AG04450 (cell line): ENCODE measurements at regions of chr1 and their contacts with region 1.

Region 1: GRCh38 chr1:241611063-241611462 is 29.1 kb downstream of the CHML start:
- DNase-seq: no peak
- H3K4me3 ChIP-seq: no peak overlapping the region
- H3K27ac ChIP-seq: no peak overlapping the region
- H3K27me3 ChIP-seq: no peaks in the 10 kb centered on the region
- CTCF ChIP-seq: peak; percentile 60

Region 2: GRCh38 chr1:241440904-241441303 is 170.2 kb before region 1 on chr1:
- CTCF ChIA-PET with region 1: no interaction called
- POLR2A ChIA-PET with region 1: no interaction called
- DNase-seq: no peak
- H3K4me3 ChIP-seq: no peak overlapping the region
- H3K27ac ChIP-seq: no peak overlapping the region
- H3K27me3 ChIP-seq: no peaks in the 10 kb centered on the region
- CTCF ChIP-seq: no peak

Region 3: DNA sequence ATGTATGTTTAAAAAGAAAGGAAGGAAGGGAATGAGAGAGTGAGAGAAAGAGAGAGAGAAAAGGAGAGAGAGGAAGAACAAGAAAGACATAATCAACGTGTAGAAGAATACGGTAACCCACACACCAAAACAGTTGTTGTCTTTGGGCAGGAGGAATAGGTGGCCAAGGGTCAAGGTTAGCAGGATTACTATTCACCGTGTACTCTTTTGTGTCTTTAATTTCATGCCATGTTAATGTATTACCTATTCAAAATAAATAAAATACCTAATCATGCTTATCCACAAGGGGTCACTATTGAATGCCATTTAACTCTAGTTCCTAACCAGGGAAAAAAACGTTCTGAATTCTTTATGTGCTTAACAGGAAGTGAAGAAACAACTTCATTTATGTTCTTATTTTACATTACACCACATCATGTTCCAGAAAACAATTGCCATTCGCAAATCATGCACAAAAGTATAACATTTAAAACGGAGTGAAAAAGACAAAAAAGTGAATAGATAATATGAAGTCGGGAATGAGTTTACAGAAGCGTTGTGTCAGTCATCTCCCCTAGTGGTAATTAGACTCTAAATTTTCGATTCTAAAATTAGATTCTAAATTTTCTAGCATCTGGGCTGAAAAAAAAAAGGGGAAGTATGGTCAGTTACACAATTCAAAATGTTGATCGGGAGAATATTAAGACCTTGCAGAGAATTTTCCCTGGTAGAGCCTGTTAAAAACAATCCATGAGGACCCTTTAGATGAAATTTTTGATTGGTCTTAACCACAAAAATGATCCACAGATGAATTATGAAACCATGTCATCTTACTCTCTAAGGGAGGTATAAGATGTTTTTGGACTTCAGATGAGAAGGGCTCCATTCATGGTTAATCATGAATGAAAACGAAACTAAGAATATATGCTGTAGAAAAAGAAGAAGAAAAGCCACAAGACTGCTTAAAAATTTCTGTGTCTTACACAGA is 79.6 kb before region 1 on chr1:
- CTCF ChIA-PET with region 1: interaction called, 13 read pairs
- POLR2A ChIA-PET with region 1: no interaction called
- DNase-seq: peak; percentile 33
- H3K4me3 ChIP-seq: peak overlapping the region; percentile 59
- H3K27ac ChIP-seq: no peak overlapping the region
- H3K27me3 ChIP-seq: peaks cover 10% of the 10 kb centered on the region
- CTCF ChIP-seq: peak; percentile 59

Region 4: GRCh38 chr1:241640029-241640818 is 29.2 kb after region 1 on chr1 and contains the starts of genes CHML and OPN3:
- CTCF ChIA-PET with region 1: interaction called, 45 read pairs
- POLR2A ChIA-PET with region 1: interaction called, 3 read pairs
- DNase-seq: peak; percentile 57
- H3K4me3 ChIP-seq: peak within 1 kb of the TSS; percentile 95
- H3K27ac ChIP-seq: peak within 1 kb of the TSS; percentile 77
- H3K27me3 ChIP-seq: no peaks in the 10 kb centered on the region
- CTCF ChIP-seq: no peak
- polyA plus RNA-seq, gene CHML: 13.0 and 17.1 TPM in 2 replicates
- polyA plus RNA-seq, gene OPN3: 57.1 and 70.1 TPM in 2 replicates

Region 5: DNA sequence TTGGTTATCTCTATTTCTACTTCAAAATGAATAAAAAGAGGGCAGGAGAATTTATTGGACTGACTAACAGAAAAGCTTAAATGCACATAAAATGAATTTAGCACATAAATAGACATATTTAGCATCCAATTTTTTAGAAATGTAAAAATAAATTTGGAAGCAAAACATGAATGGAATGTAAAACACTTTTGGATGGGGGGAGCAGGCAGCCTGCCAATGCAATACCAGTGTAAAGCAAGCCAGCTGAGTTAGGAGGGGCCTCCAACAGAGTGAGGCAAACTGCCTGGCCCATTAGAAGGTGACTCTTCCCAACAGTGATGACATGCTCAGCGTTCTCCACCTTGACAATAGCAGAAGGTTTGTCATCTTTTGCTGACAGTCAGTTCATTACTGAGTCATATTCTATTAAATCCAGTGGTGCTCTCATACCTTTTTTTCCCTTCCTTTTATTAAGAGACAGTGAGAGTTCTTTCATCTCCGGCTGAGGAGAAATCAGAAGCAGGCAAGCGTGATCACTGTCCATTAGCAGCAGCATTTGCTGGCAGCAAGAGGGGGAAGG is 217.5 kb after region 1 on chr1:
- CTCF ChIA-PET with region 1: interaction called, 45 read pairs
- POLR2A ChIA-PET with region 1: no interaction called
- DNase-seq: no peak
- H3K4me3 ChIP-seq: no peak overlapping the region
- H3K27ac ChIP-seq: no peak overlapping the region
- H3K27me3 ChIP-seq: no peaks in the 10 kb centered on the region
- CTCF ChIP-seq: no peak

Region 6: GRCh38 chr1:241847796-241848685 is 237.0 kb after region 1 on chr1 and contains the start of gene EXO1:
- CTCF ChIA-PET with region 1: interaction called, 42 read pairs
- POLR2A ChIA-PET with region 1: interaction called, 3 read pairs
- DNase-seq: peak; percentile 69
- H3K4me3 ChIP-seq: peak within 1 kb of the TSS; percentile 90
- H3K27ac ChIP-seq: peak within 1 kb of the TSS; percentile 100
- H3K27me3 ChIP-seq: no peaks in the 10 kb centered on the region
- CTCF ChIP-seq: peak; percentile 37
- polyA plus RNA-seq, gene EXO1: 2.9 and 4.3 TPM in 2 replicates

Region 7: DNA sequence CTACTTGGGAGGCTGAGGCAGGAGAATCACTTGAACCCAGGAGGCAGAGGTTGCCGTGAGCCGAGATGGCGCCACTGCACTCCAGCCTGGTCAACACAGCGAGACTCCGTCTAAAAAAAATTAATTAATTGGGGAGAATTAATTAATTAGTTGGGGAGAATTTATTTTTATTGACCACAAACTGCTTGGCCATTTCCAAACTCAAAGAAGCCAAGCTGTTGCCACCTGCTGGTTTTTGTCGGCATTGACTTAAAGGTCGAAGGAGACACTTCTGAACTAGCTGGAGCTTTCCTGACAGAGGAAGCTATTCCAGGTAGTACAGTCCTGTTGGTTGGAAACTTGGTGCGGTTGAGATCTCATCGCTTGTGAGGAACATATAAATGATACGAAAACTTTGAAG is 374.7 kb after region 1 on chr1:
- CTCF ChIA-PET with region 1: interaction called, 23 read pairs
- POLR2A ChIA-PET with region 1: no interaction called
- DNase-seq: no peak
- H3K4me3 ChIP-seq: no peak overlapping the region
- H3K27ac ChIP-seq: no peak overlapping the region
- H3K27me3 ChIP-seq: no peaks in the 10 kb centered on the region
- CTCF ChIP-seq: peak; percentile 58